BJ (cell line): ENCODE measurements at regions of chr6 and their contacts with region 1.

Region 1: GRCh38 chr6:2988426-2989331 is 11.0 kb upstream of the NQO2 start:
- DNase-seq: peak; percentile 89
- H3K4me3 ChIP-seq: peak overlapping the region; percentile 69
- H3K27me3 ChIP-seq: no peaks in the 10 kb centered on the region
- CTCF ChIP-seq: peak; percentile 63

Region 2: GRCh38 chr6:2848851-2849250 is 139.8 kb before region 1 on chr6:
- CTCF ChIA-PET with region 1: interaction called, 53 read pairs
- POLR2A ChIA-PET with region 1: no interaction called
- DNase-seq: no peak
- H3K4me3 ChIP-seq: no peak overlapping the region
- H3K27me3 ChIP-seq: no peaks in the 10 kb centered on the region
- CTCF ChIP-seq: no peak

Region 3: GRCh38 chr6:2952557-2953095 is 36.1 kb before region 1 on chr6:
- CTCF ChIA-PET with region 1: interaction called, 191 read pairs
- POLR2A ChIA-PET with region 1: interaction called, 6 read pairs
- DNase-seq: peak; percentile 78
- H3K4me3 ChIP-seq: no peak overlapping the region
- H3K27me3 ChIP-seq: no peaks in the 10 kb centered on the region
- CTCF ChIP-seq: peak; percentile 99

Region 4: GRCh38 chr6:2976571-2977085 is 12.1 kb before region 1 on chr6:
- CTCF ChIA-PET with region 1: interaction called, 28 read pairs
- POLR2A ChIA-PET with region 1: interaction called, 7 read pairs
- DNase-seq: peak; percentile 82
- H3K4me3 ChIP-seq: no peak overlapping the region
- H3K27me3 ChIP-seq: no peaks in the 10 kb centered on the region
- CTCF ChIP-seq: no peak